ENCODE measurements at regions of chr6 and their contacts with region 1.

Region 1: DNA sequence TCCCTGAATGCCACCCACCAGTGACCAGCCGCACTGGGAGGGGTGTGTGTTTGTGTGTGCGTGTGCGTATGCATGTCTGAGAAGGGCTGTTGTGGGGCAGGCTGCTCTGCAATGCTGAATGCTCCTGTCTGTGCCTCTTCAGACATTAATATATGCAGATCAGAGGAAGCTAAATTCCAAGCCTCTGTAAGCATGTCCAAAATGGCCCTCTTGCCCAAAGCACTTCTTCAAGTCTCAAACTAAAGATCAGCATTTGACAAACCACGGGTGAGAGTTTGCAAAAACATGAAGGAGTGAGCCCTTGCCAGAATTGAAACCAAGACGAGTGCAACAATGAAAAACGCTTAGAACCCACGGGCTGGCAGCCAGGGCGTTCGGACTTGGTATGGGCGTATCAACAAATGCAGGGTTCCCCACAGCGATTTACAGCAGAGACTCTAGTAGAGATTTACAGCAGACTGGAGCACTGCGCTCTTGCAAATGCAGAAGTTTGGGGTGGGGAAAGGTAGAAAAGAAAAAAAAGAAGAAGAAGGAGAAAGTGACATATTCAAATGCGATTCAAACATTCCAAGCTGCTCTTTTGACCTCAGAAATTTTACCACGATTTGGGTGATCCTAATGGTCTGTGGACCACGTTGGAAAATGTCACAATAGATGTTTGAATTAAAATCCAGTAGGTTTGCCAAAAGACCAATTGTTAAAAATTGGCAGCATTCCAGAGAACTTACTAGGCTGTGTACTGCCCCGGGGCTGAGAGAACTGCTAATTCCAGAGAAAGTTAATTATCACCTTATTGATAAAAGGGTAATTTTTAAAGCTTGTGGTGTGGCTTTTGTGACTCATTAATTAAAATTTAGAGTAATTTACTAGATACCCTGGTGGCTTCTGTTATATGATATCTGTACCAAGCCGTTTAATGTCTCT is 3.5 kb downstream of the SCML4 start:
- DNase-seq: peak; percentile 42 to 59 (median 46)
- H3K4me3 ChIP-seq: peak overlapping the region; percentile 26 to 68
- H3K4me3 Mint-ChIP-seq: peak overlapping the region; percentile 94 to 98 (median 96)
- H3K27ac ChIP-seq: peak overlapping the region; percentile 97
- H3K27ac Mint-ChIP-seq: peak overlapping the region; percentile 99 to 100 (median 99)
- H3K4me1 ChIP-seq: peaks cover 71% of the 10 kb centered on the region
- H3K4me1 Mint-ChIP-seq: peaks cover 57 to 89% (median 72%) of the 10 kb centered on the region in 4 donors
- H3K27me3 ChIP-seq: no peaks in the 10 kb centered on the region
- H3K27me3 Mint-ChIP-seq: peaks cover 0 to 3% of the 10 kb centered on the region in 2 donors

Region 2: GRCh38 chr6:107684996-107685395 is 135.6 kb before region 1 on chr6:
- CTCF ChIA-PET with region 1: no interaction called
- POLR2A ChIA-PET with region 1: no interaction called
- intact Hi-C with region 1: no loop called
- DNase-seq: no peak
- H3K4me3 ChIP-seq: no peak overlapping the region
- H3K4me3 Mint-ChIP-seq: no peak overlapping the region
- H3K27ac ChIP-seq: no peak overlapping the region
- H3K27ac Mint-ChIP-seq: no peak overlapping the region
- H3K4me1 ChIP-seq: no peaks in the 10 kb centered on the region
- H3K4me1 Mint-ChIP-seq: no peaks in the 10 kb centered on the region
- H3K27me3 ChIP-seq: no peaks in the 10 kb centered on the region
- H3K27me3 Mint-ChIP-seq: peaks cover 2 to 3% of the 10 kb centered on the region in 2 donors

Region 3: GRCh38 chr6:107716688-107717089 is 103.9 kb before region 1 on chr6:
- CTCF ChIA-PET with region 1: interaction called, 4 read pairs
- POLR2A ChIA-PET with region 1: interaction called, 270 read pairs
- intact Hi-C with region 1: loop called (anchors 1 kb)
- DNase-seq: peak; percentile 83 to 92 (median 87)
- H3K4me3 ChIP-seq: no peak overlapping the region
- H3K4me3 Mint-ChIP-seq: peak overlapping the region in 7 of 8 donors; percentile 40 to 78 (median 74)
- H3K27ac ChIP-seq: no peak overlapping the region
- H3K27ac Mint-ChIP-seq: peak overlapping the region; percentile 89 to 98 (median 94)
- H3K4me1 ChIP-seq: peaks cover 66% of the 10 kb centered on the region
- H3K4me1 Mint-ChIP-seq: peaks cover 57 to 90% (median 75%) of the 10 kb centered on the region in 4 donors
- H3K27me3 ChIP-seq: no peaks in the 10 kb centered on the region
- H3K27me3 Mint-ChIP-seq: no peaks in the 10 kb centered on the region

Region 4: GRCh38 chr6:107740496-107741190 is 80.0 kb before region 1 on chr6:
- CTCF ChIA-PET with region 1: interaction called, 33 read pairs
- POLR2A ChIA-PET with region 1: interaction called, 205 read pairs
- intact Hi-C with region 1: loop called (anchors 1 kb)
- DNase-seq: peak in 3 of 5 donors; percentile 33 to 42 (median 39)
- H3K4me3 ChIP-seq: peak overlapping the region; percentile 21 to 60
- H3K4me3 Mint-ChIP-seq: peak overlapping the region; percentile 75 to 91 (median 80)
- H3K27ac ChIP-seq: peak overlapping the region; percentile 63
- H3K27ac Mint-ChIP-seq: peak overlapping the region; percentile 89 to 96 (median 92)
- H3K4me1 ChIP-seq: peaks cover 74% of the 10 kb centered on the region
- H3K4me1 Mint-ChIP-seq: peaks cover 75 to 86% (median 79%) of the 10 kb centered on the region in 4 donors
- H3K27me3 ChIP-seq: no peaks in the 10 kb centered on the region
- H3K27me3 Mint-ChIP-seq: no peaks in the 10 kb centered on the region

Region 5: DNA sequence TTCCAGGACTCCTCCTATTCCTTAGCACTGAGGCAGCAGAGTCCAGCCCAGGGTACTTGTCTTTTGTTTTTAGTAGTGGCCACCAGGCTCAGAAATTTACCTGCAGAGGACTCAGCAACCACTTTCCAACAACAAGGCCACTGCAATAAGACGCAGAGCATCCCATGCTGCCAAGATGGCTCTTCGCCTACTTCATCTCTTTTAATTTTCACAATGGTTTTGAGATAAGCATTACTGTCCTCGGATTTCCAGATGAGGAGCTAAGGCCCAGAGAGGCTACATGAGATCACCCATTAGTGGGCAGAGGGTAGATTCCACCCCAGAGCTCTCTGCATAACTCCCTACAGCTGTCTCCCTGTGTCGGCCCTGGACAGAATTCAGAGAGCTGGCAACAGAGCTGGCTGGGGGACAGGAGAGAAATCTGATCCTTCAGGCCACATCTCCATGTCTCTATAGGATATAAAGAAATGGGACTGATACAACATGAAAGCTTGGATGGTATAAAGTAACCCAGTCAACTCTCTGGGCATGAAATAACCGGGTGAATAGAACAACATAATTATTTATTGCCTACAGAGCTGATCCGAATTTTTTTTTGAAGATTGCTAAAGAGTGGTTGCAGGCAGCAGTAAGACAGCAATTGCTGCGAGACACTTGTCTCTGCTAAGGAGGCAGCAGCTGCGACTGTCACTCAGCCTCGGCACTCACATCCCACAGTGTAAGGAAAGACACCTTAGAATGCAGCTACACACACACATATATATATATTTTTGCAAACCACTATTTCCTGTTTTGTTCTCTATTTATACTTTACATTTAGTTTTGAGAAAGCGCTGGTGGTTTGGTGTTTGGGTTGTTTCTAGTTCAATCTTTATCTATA is 33.7 kb before region 1 on chr6:
- CTCF ChIA-PET with region 1: interaction called, 32 read pairs
- POLR2A ChIA-PET with region 1: interaction called, 150 read pairs
- intact Hi-C with region 1: loop called (anchors 2 kb)
- DNase-seq: peak; percentile 46 to 62 (median 58)
- H3K4me3 ChIP-seq: peak overlapping the region in 1 of 2 donors; percentile 33
- H3K4me3 Mint-ChIP-seq: peak overlapping the region; percentile 78 to 98 (median 84)
- H3K27ac ChIP-seq: peak overlapping the region; percentile 45
- H3K27ac Mint-ChIP-seq: peak overlapping the region; percentile 85 to 98 (median 95)
- H3K4me1 ChIP-seq: peaks cover 89% of the 10 kb centered on the region
- H3K4me1 Mint-ChIP-seq: peaks cover 68 to 91% (median 78%) of the 10 kb centered on the region in 4 donors
- H3K27me3 ChIP-seq: no peaks in the 10 kb centered on the region
- H3K27me3 Mint-ChIP-seq: no peaks in the 10 kb centered on the region

Region 6: GRCh38 chr6:107800564-107801164 is 19.9 kb before region 1 on chr6:
- CTCF ChIA-PET with region 1: interaction called, 7 read pairs
- POLR2A ChIA-PET with region 1: interaction called, 19 read pairs
- intact Hi-C with region 1: loop called (anchors 2 kb)
- DNase-seq: peak in 1 of 5 donors; percentile 38
- H3K4me3 ChIP-seq: no peak overlapping the region
- H3K4me3 Mint-ChIP-seq: peak overlapping the region in 1 of 8 donors; percentile 41
- H3K27ac ChIP-seq: no peak overlapping the region
- H3K27ac Mint-ChIP-seq: peak overlapping the region in 6 of 7 donors; percentile 10 to 81 (median 73)
- H3K4me1 ChIP-seq: peaks cover 65% of the 10 kb centered on the region
- H3K4me1 Mint-ChIP-seq: peaks cover 50 to 78% (median 61%) of the 10 kb centered on the region in 4 donors
- H3K27me3 ChIP-seq: no peaks in the 10 kb centered on the region
- H3K27me3 Mint-ChIP-seq: no peaks in the 10 kb centered on the region

Region 7: GRCh38 chr6:107832151-107833056 is 11.8 kb after region 1 on chr6:
- CTCF ChIA-PET with region 1: interaction called, 22 read pairs
- POLR2A ChIA-PET with region 1: interaction called, 85 read pairs
- intact Hi-C with region 1: no loop called
- DNase-seq: no peak
- H3K4me3 ChIP-seq: no peak overlapping the region
- H3K4me3 Mint-ChIP-seq: peak overlapping the region; percentile 11 to 73 (median 54)
- H3K27ac ChIP-seq: no peak overlapping the region
- H3K27ac Mint-ChIP-seq: peak overlapping the region; percentile 1 to 82 (median 63)
- H3K4me1 ChIP-seq: peaks cover 22% of the 10 kb centered on the region
- H3K4me1 Mint-ChIP-seq: peaks cover 11 to 42% (median 31%) of the 10 kb centered on the region in 4 donors
- H3K27me3 ChIP-seq: no peaks in the 10 kb centered on the region
- H3K27me3 Mint-ChIP-seq: no peaks in the 10 kb centered on the region

Region 8: GRCh38 chr6:108074359-108075144 is 254.0 kb after region 1 on chr6 and contains the start of gene OSTM1:
- CTCF ChIA-PET with region 1: no interaction called
- POLR2A ChIA-PET with region 1: no interaction called
- intact Hi-C with region 1: no loop called
- DNase-seq: peak; percentile 88 to 93 (median 93)
- H3K4me3 ChIP-seq: peak within 1 kb of the TSS; percentile 66 to 100
- H3K4me3 Mint-ChIP-seq: peak within 1 kb of the TSS; percentile 87 to 95 (median 90)
- H3K27ac ChIP-seq: peak within 1 kb of the TSS; percentile 78
- H3K27ac Mint-ChIP-seq: peak within 1 kb of the TSS; percentile 90 to 96 (median 94)
- H3K4me1 ChIP-seq: peaks cover 24% of the 10 kb centered on the region
- H3K4me1 Mint-ChIP-seq: peaks cover 18 to 32% (median 20%) of the 10 kb centered on the region in 4 donors
- H3K27me3 ChIP-seq: no peaks in the 10 kb centered on the region
- H3K27me3 Mint-ChIP-seq: peaks cover 0 to 5% of the 10 kb centered on the region in 2 donors
- total RNA-seq, gene OSTM1: 54.4 to 55.6 TPM